Sigmoid colon (tissue), 7 donors: ENCODE measurements at regions of chr1 and their contacts with region 1.

Region 1: DNA sequence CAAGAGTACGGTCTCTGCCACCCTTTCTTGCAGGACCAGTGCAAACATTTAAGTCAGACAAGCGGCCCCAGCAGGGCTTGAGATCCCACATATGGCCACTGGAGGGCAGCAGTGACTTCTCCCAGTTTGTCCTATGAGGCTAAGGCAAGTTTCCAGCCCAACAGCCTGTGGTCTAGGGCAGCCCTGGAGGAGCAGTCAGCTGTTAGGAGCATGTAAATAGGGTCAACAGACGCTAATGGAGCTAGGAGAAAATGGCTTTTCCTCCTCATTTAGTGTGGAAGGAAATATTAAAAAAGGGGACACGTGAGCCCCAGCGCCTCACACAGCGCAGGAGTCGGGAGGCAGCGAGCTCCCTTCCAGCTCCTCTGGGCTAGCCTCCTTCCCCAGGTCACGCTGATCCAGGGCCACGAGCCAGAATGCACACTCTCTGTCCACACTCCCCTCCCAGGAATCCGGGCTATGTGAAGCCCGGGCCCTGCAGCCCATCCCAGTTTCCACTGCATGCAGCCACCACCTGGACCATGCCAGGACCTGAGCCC is 95.6 kb downstream of the LAMC2 start:
- DNase-seq: peak; percentile 97
- H3K4me3 ChIP-seq: peak overlapping the region in 2 of 4 donors; percentile 3 to 6
- H3K27ac ChIP-seq: peak overlapping the region; percentile 72 to 84 (median 76)
- H3K4me1 ChIP-seq: peaks cover 0 to 65% (median 46%) of the 10 kb centered on the region in 4 donors
- H3K27me3 ChIP-seq: no peaks in the 10 kb centered on the region
- CTCF ChIP-seq: peak; percentile 89 to 94 (median 93)
- EP300 ChIP-seq: no peak
- POLR2A ChIP-seq: no peak

Region 2: DNA sequence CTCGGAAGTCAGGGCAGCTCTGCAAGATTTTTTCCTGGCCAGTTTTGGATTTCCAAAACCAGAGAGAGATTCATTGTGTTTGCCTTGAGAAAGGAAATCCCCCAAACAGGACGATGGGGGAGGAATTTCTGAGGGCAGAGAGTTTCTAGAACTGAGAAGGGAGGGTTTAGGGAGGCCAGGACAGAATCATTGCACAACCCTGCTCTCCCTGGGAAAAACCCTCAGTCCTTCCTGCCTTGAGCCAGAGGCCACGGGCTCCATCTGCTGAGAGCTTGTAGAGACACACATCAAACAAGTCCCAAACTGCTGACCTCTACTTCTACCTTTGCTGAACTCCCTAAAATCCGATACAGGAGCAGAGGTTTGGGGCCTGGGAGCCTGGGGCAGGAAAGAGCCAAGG is 36.8 kb after region 1 on chr1:
- intact Hi-C with region 1: loop called (anchors 1 kb)
- DNase-seq: peak; percentile 95
- H3K4me3 ChIP-seq: no peak overlapping the region
- H3K27ac ChIP-seq: peak overlapping the region; percentile 75 to 80 (median 78)
- H3K4me1 ChIP-seq: peaks cover 0 to 57% (median 35%) of the 10 kb centered on the region in 4 donors
- H3K27me3 ChIP-seq: no peaks in the 10 kb centered on the region
- CTCF ChIP-seq: peak; percentile 38 to 68 (median 60)
- EP300 ChIP-seq: no peak
- POLR2A ChIP-seq: no peak

Region 3: GRCh38 chr1:183543619-183544204 is 262.1 kb after region 1 on chr1:
- intact Hi-C with region 1: loop called (anchors 10 kb)
- DNase-seq: no peak
- H3K4me3 ChIP-seq: no peak overlapping the region
- H3K27ac ChIP-seq: no peak overlapping the region
- H3K4me1 ChIP-seq: peaks cover 0 to 8% (median 3%) of the 10 kb centered on the region in 4 donors
- H3K27me3 ChIP-seq: no peaks in the 10 kb centered on the region
- CTCF ChIP-seq: peak; percentile 20 to 68 (median 59)
- EP300 ChIP-seq: no peak
- POLR2A ChIP-seq: no peak

Region 4: DNA sequence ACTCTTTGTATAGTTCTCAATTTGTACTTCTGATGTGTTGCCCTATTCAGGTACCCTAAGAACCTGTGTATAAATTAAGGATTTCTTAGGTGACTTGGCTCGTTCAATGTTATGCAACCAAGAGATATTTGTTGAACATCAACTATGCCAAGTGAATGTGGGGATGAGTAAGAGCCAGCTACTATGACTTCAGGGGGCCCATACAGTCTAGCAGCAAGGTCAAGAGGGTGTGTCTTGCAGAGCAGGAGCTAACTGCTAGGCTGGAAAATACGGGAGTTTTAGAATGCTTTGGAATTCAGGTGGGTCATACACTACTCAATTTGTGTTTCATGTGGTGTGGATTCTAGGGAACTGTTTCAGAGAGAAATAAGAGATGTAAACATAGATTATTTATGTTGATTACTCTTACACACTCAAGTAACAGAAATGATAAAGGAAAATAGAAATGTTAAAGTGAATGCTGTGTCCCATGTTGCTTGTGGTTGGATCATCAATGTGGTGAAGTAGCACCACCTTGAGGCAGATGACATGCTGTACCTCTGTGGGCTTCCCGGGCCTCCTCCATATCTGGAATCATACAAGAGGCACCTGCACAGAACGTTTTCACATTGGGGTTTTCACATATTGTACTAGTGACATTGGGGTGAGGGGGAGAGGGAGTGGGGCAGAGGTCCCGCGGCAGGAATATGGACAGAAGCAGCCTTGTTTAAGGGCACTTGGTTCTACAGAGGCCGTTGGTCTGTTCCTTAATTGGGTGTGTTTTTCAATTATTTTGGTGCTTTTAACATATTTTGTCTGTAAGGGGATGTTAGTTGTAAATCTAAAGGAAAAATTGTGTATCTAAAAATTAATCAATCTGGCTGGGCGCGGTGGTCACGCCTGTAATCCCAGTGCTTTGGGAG is 341.5 kb after region 1 on chr1:
- intact Hi-C with region 1: loop called (anchors 10 kb)
- DNase-seq: no peak
- H3K4me3 ChIP-seq: no peak overlapping the region
- H3K27ac ChIP-seq: peak overlapping the region; percentile 43 to 54 (median 50)
- H3K4me1 ChIP-seq: peaks cover 0 to 50% (median 36%) of the 10 kb centered on the region in 4 donors
- H3K27me3 ChIP-seq: no peaks in the 10 kb centered on the region
- CTCF ChIP-seq: peak in 3 of 4 experiments; percentile 34 to 59 (median 51)
- EP300 ChIP-seq: no peak
- POLR2A ChIP-seq: no peak